SK-N-SH (cell line): ENCODE measurements at regions of chr3 and their contacts with region 1.

Region 1: DNA sequence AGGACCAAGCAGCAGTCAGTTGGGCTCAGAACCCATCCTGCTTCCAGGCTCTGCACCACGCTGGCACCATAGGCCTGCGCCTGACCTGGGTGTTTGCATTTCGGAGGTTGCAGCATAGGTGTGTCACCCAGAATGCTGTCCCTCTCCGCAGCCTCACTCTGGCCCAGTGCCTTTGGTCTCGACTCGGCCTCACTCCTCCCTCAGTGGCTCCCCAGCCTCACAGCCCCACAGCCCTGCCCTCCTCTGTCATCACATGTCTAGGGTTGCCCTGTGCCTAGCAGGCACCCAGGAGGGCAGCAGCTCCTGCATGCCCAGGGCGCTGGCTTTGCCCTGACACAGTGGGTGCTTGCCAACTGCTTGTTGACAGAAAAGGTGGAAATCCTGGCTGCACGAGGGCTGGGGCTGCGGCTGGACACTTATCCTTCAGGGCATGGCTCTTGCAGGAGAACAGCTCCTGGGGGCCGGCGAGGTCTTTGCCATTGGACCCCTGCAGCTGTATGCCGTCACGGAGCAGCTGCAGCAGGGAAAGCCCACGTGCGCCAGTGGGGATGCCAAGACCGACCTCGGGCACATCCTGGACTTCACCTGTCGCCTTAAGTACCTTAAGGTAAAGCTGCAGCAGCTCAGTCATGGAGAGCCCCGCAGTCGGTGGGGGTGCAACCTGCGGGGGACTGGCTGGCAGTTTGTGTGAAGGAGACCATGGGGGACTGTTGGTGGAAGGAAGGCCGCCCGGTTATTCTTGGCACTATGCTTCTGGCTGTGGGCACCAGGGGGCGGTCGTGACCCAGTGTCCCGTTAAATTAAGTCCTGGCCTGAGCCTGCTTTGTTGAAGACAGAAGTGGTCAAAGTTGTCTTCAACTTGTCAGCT is 16.2 kb downstream of the NISCH start:
- DNase-seq: peak; percentile 83
- H3K4me3 ChIP-seq: no peak overlapping the region
- H3K27ac ChIP-seq: no peak overlapping the region
- H3K4me1 ChIP-seq: peaks cover 0 to 3% of the 10 kb centered on the region in 2 experiments; a peak in 1 of 4 replicates
- H3K27me3 ChIP-seq: no peaks in the 10 kb centered on the region
- CTCF ChIP-seq: peak; percentile 82
- EP300 ChIP-seq: no peak
- RAD21 ChIP-seq: peak; percentile 89

Region 2: GRCh38 chr3:52444860-52445793 is 26.5 kb before region 1 on chr3 and contains the start of gene SEMA3G:
- CTCF ChIA-PET with region 1: interaction called, 19 read pairs
- POLR2A ChIA-PET with region 1: interaction called, 3 read pairs
- DNase-seq: peak; percentile 84
- H3K4me3 ChIP-seq: no peak within 1 kb of the TSS
- H3K27ac ChIP-seq: no peak within 1 kb of the TSS
- H3K4me1 ChIP-seq: peaks cover 0 to 5% of the 10 kb centered on the region in 2 experiments; a peak in 1 of 4 replicates
- H3K27me3 ChIP-seq: no peaks in the 10 kb centered on the region
- CTCF ChIP-seq: peak; percentile 40; the same call in 1 of the 2 replicates
- EP300 ChIP-seq: no peak
- RAD21 ChIP-seq: no peak
- polyA plus RNA-seq, gene SEMA3G: 0.10 and 0.13 TPM in 2 replicates

Region 3: GRCh38 chr3:52455283-52456168 is 16.1 kb before region 1 on chr3 and contains the start of gene NISCH:
- CTCF ChIA-PET with region 1: interaction called, 53 read pairs
- POLR2A ChIA-PET with region 1: interaction called, 3 read pairs
- DNase-seq: peak; percentile 99
- H3K4me3 ChIP-seq: peak within 1 kb of the TSS; percentile 89
- H3K27ac ChIP-seq: peak within 1 kb of the TSS; percentile 52 to 81; a peak in 3 of 4 replicates
- H3K4me1 ChIP-seq: peaks cover 8 to 26% of the 10 kb centered on the region in 2 experiments
- H3K27me3 ChIP-seq: no peaks in the 10 kb centered on the region
- CTCF ChIP-seq: no peak
- EP300 ChIP-seq: no peak
- RAD21 ChIP-seq: no peak
- polyA plus RNA-seq, gene NISCH: 77.5 and 95.1 TPM in 2 replicates

Region 4: DNA sequence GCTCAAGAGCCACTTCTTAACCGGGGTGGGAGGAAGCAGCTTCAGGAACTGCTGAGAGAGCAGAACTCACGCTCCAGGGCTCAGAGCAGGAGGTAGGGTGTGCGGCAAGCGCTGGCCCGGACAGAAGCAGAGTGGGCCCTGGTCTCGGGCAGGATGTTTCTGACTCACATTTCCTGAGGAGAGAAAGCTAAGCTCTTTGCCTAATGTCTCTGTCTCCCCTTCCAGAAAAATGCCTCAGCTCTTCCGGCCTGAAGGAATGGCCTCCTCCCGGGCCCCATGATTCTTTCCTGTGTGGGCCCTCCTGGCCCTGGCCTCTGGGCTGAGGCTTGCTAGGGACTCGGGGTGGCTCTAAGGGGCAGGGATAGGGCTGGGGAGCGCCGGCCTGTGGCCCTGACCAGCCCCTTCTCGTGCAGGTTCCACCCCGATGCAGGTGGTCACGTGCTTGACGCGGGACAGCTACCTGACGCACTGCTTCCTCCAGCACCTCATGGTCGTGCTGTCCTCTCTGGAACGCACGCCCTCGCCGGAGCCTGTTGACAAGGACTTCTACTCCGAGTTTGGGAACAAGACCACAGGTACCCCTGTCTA is 19.4 kb after region 1 on chr3:
- CTCF ChIA-PET with region 1: interaction called, 24 read pairs
- POLR2A ChIA-PET with region 1: no interaction called
- DNase-seq: no peak
- H3K4me3 ChIP-seq: no peak overlapping the region
- H3K27ac ChIP-seq: peak overlapping the region in 1 of 2 experiments; percentile 55; a peak in 3 of 4 replicates
- H3K4me1 ChIP-seq: peaks cover 3 to 9% of the 10 kb centered on the region in 2 experiments; a peak in 2 of 4 replicates
- H3K27me3 ChIP-seq: no peaks in the 10 kb centered on the region
- CTCF ChIP-seq: no peak
- EP300 ChIP-seq: no peak
- RAD21 ChIP-seq: no peak

Region 5: GRCh38 chr3:52529376-52530333 is 58.0 kb after region 1 on chr3:
- CTCF ChIA-PET with region 1: interaction called, 30 read pairs
- POLR2A ChIA-PET with region 1: no interaction called
- DNase-seq: peak; percentile 90
- H3K4me3 ChIP-seq: no peak overlapping the region; a peak in 1 of 4 replicates
- H3K27ac ChIP-seq: peak overlapping the region in 1 of 2 experiments; percentile 97; a peak in 3 of 4 replicates
- H3K4me1 ChIP-seq: peaks cover 28 to 81% of the 10 kb centered on the region in 2 experiments
- H3K27me3 ChIP-seq: no peaks in the 10 kb centered on the region
- CTCF ChIP-seq: no peak
- EP300 ChIP-seq: peak in 1 of 2 experiments; percentile 77; a peak in 2 of 4 replicates
- RAD21 ChIP-seq: peak; percentile 26; the same call in 1 of the 2 replicates

Region 6: DNA sequence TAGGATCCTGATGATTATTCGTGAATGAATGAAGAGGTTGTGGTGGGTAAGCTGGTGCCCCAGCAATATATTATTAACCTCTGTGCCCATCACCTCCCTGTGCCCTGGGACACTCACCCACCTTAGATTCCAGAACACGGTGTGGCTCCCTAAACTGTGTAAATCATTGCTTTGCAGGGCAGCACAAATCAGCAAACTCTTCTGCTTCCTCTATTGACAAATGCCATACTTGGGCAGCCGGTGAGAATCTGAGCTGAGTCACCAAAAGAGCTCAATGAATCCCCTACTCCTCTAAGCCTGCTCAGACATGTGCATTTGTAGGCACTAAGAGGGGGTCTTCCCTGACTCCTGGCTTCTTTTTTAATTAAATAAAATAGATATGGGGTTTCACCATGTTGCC is 80.5 kb after region 1 on chr3:
- CTCF ChIA-PET with region 1: interaction called, 17 read pairs
- POLR2A ChIA-PET with region 1: no interaction called
- DNase-seq: no peak
- H3K4me3 ChIP-seq: no peak overlapping the region
- H3K27ac ChIP-seq: no peak overlapping the region
- H3K4me1 ChIP-seq: peaks cover 0 to 7% of the 10 kb centered on the region in 2 experiments; a peak in 2 of 4 replicates
- H3K27me3 ChIP-seq: no peaks in the 10 kb centered on the region
- CTCF ChIP-seq: no peak
- EP300 ChIP-seq: no peak
- RAD21 ChIP-seq: no peak

Region 7: GRCh38 chr3:52633786-52634185 is 162.2 kb after region 1 on chr3:
- CTCF ChIA-PET with region 1: interaction called, 11 read pairs
- POLR2A ChIA-PET with region 1: no interaction called
- DNase-seq: no peak
- H3K4me3 ChIP-seq: no peak overlapping the region
- H3K27ac ChIP-seq: 0 out of 4 replicates have a peak overlapping the region, but pooled peaks of 1 of the 2 experiments have one; percentile 11
- H3K4me1 ChIP-seq: no peaks in the 10 kb centered on the region; a peak in 1 of 4 replicates
- H3K27me3 ChIP-seq: no peaks in the 10 kb centered on the region
- CTCF ChIP-seq: no peak
- EP300 ChIP-seq: no peak
- RAD21 ChIP-seq: no peak